Activated T-helper 2 cell treated with anti-CD3 and anti-CD28 coated beads, Interferon-gamma antibody, Interleukin-2, Interleukin-4, amounts not matched to agents 10 μg/mL and 5 μg/mL and 100 μg/mL, durations not matched to agents 14 hours and 24 hours and 36 hours (primary cell): ENCODE measurements at regions of chr12 and their contacts with region 1.

Region 1: DNA sequence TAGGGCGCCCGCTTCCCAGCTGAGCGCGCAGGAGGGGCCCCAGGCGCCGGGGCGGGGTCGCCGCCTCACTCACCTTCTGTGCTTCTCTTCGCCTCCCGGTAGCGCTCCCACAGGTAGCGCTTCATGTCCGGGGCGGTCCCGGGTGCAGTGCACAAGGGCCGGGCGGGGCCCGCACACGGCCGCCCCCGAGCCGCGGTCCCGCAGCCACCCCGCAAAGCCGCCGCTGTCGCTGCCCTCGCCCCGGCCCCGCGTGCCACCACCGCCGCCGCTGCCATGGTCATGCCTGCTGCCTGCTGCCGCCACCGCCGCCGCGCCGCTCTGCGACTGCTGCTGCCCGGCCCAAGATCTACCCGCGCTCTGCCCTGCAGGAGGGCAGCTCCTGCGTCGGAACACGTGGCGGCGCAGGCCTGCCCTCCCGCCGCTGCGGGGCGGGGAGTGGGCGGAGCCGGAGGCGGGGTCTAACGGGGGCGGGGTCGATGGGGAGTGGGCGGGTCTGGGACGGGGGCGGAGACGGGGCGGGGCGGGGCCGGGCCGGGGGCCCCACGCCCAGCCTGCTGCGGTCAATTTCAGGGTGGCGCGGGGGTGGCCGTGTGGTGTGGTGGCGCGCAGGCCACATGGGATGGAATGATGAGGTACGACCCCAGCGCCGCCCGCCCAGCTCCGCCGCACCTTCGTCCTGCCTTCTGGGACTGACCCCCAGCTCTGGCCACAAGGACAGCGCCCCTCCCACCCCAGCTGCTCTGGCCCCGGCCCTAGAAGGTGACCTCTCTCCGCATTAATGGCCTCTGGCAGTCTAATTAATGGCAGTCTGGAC is at the start of gene NT5DC3:
- DNase-seq: peak; percentile 77
- H3K4me3 Mint-ChIP-seq: peak within 1 kb of the TSS; percentile 89
- H3K27ac Mint-ChIP-seq: peak within 1 kb of the TSS; percentile 77
- H3K4me1 Mint-ChIP-seq: peaks cover 18% of the 10 kb centered on the region
- H3K27me3 Mint-ChIP-seq: peaks cover 12% of the 10 kb centered on the region
- total RNA-seq, gene NT5DC3: 10.9 and 12.0 TPM in 2 replicates

Region 2: GRCh38 chr12:102119674-102120563 is 1721.2 kb before region 1 on chr12 and contains the starts of genes NUP37 and PARPBP:
- intact Hi-C with region 1: loop called (anchors 5 kb)
- DNase-seq: peak; percentile 91
- H3K4me3 Mint-ChIP-seq: peak within 1 kb of the TSS; percentile 89
- H3K27ac Mint-ChIP-seq: peak within 1 kb of the TSS; percentile 77
- H3K4me1 Mint-ChIP-seq: peaks cover 36% of the 10 kb centered on the region
- H3K27me3 Mint-ChIP-seq: no peaks in the 10 kb centered on the region
- total RNA-seq, gene NUP37: 93.1 and 93.9 TPM in 2 replicates
- total RNA-seq, gene PARPBP: 27.0 and 27.4 TPM in 2 replicates

Region 3: DNA sequence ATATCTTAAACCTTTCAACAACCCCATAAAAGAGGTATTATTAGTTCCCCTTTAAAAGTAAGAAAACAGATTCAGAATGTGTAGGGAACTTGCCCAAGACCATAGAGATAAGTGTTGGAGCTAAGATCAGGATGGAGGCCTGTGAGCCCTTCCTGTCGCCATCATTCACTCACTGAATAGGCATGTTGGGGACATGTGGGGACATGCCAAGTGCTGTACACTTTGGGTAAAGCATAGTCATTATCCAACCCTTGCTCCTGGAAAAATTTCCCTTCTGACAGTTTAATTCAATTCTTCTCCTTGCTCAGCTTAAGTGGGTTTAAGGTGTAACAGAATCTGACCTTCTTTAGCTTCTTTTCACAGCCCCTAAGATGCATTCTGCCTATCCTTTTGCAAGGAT is 317.3 kb before region 1 on chr12:
- intact Hi-C with region 1: no loop called
- DNase-seq: no peak
- H3K4me3 Mint-ChIP-seq: no peak overlapping the region
- H3K27ac Mint-ChIP-seq: no peak overlapping the region
- H3K4me1 Mint-ChIP-seq: peaks cover 4% of the 10 kb centered on the region
- H3K27me3 Mint-ChIP-seq: no peaks in the 10 kb centered on the region

Region 4: DNA sequence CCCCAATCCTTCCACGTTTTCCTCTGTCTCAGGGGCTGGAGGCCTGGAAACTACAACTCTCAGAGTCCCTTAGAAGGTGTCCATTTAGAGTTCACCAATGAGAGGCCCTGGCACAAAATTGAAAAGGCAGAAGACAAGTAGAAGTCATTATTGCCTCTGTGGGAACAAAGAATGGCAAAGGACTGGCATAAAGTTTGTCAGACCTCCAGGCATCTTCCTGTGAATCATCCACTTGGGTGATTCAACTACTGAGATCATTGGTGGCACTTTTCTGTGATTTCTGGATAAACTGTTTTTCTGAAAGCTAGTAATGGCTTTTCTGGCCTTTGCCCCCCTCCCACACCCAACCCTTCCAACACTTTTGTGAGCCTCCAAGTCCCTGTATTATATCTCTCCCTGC is 302.7 kb before region 1 on chr12:
- intact Hi-C with region 1: no loop called
- DNase-seq: no peak
- H3K4me3 Mint-ChIP-seq: no peak overlapping the region
- H3K27ac Mint-ChIP-seq: no peak overlapping the region
- H3K4me1 Mint-ChIP-seq: peaks cover 15% of the 10 kb centered on the region
- H3K27me3 Mint-ChIP-seq: no peaks in the 10 kb centered on the region

Region 5: DNA sequence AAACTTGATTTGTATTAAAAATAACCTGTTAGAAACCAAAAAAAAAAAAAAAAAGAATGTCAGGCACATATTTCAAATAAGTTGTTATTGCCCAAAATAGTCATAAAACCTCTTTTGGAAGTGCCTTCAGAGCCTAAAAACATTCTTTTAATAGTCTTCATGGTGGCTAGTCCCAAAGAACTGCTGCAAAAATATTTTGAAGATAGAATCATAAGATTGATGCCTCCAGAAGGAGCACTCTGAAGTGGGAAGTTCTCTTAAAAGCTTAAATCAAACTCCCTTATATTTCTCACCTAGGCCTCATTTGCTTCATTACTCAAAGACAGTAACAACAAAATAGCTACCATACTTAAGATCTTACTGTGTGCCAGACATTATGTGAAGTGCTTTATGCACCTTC is 27.1 kb after region 1 on chr12:
- intact Hi-C with region 1: no loop called
- DNase-seq: no peak
- H3K4me3 Mint-ChIP-seq: no peak overlapping the region
- H3K27ac Mint-ChIP-seq: no peak overlapping the region
- H3K4me1 Mint-ChIP-seq: no peaks in the 10 kb centered on the region
- H3K27me3 Mint-ChIP-seq: peaks cover 15% of the 10 kb centered on the region

Region 6: DNA sequence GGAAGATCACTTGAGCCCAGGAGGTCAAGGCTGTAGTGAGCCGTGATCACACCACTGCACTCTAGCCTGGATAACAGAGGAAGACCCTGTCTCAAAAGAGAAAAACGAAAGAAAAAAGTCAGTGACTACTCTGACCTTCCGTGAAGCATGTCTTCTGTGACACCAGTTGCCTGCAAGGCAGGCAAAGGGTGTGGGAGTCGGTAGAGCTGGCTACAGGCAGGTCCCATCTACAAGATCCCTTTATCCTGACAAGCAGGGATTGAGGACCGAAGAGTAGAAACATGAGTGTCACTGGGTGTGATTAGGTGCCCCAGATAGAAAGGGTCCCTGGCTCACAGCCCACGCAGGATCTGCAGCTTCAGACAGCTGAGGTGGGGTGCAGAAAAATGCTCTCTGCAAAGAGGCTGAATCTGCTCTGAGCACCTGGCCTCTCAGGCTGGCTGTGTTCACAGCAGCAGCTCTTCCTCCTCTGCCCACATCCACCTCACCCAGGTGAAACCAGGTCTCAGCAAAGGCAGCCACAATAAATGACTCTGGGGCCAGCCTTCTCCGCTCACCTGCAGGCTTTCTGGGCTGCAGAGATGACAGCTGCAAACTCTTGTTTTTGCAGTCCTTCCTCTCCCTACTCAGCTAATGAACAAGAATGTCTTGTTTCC is 60.6 kb after region 1 on chr12:
- intact Hi-C with region 1: no loop called
- DNase-seq: no peak
- H3K4me3 Mint-ChIP-seq: no peak overlapping the region
- H3K27ac Mint-ChIP-seq: no peak overlapping the region
- H3K4me1 Mint-ChIP-seq: peaks cover 15% of the 10 kb centered on the region
- H3K27me3 Mint-ChIP-seq: no peaks in the 10 kb centered on the region

Region 7: DNA sequence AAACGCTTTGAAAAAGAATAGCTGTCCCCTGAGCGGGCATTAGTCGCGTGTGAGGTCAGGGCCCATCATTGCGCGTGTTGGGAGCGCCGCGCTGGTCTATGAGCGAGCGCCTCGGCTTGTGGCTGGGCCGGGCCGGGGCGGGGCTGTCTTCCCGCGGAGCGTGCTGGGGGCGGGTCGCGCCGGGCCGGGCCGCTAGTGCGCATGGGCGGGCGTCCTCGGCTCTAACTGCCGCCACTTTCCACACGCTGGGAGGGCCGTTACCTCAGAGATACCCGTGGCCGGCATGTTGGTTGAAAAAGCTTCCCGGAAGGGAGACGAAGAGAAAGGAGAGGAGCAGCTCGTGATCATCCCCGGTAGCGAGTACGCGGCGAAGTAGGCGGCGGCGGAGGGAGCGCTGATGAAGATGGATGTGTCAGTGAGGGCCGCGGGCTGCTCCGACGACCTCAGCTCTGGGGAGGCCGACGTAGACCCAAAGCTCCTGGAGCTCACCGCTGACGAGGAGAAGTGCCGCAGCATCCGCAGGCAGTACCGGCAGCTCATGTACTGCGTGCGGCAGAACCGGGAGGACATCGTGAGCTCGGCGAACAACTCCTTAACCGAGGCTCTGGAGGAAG is 462.6 kb after region 1 on chr12 and contains the start of gene EID3:
- intact Hi-C with region 1: loop called (anchors 10 kb)
- DNase-seq: peak; percentile 91
- H3K4me3 Mint-ChIP-seq: peak within 1 kb of the TSS; percentile 90
- H3K27ac Mint-ChIP-seq: peak within 1 kb of the TSS; percentile 99
- H3K4me1 Mint-ChIP-seq: peaks cover 62% of the 10 kb centered on the region
- H3K27me3 Mint-ChIP-seq: no peaks in the 10 kb centered on the region
- total RNA-seq, gene EID3: 9.4 and 10.1 TPM in 2 replicates